ENCODE measurements at regions of chr13 and their contacts with region 1.

Region 1: GRCh38 chr13:24995226-24995804 is 100.6 kb upstream of the PABPC3 start:
- DNase-seq: peak; percentile 73
- H3K4me3 Mint-ChIP-seq: no peak overlapping the region
- H3K27ac Mint-ChIP-seq: no peak overlapping the region
- H3K4me1 Mint-ChIP-seq: peaks cover 3% of the 10 kb centered on the region
- H3K27me3 Mint-ChIP-seq: peaks cover 26% of the 10 kb centered on the region

Region 2: DNA sequence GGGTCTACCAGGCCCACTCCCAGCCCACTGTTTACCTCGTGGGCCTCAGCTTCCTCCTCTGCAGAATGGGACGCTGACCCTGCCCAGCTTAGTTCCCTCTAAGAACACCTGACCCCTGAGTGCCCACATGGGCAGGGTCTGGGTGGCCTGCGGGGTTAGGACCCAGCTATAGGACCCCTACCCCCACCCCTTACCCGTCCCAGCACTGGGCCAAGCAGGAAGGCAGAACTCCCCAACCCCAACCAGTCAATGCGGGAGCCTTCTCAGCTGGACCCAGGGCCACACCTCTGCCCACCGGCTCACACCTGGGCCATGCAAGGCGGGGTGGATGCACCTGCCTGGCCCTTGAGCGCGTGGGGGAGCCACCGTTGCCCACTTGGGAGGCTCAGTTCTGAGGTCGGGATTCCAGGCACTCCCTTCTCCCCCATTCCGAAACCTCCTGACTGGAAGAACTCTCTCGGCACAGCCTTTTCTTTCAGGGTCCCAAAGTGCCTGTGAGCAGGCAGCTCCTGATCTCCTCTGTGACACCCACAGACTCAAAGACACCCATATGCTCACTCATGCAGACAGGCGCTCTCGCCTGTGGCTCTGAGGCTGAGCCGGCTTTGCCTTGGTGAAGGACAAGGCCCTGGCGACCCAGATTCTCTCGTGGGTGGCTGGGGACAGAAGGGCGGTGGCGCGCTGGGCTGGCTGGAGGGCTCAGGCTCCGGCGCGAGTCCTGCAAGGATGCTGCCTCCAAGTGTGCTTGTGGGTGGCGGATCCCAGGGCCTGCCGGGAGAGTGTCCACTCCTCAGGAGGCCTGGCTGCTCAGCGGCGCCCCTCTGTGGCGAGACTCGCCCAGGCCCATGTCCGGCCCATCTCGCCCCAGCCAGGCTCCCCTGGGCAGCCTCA is 454.8 kb before region 1 on chr13:
- CTCF ChIA-PET with region 1: no interaction called
- DNase-seq: no peak
- H3K4me3 Mint-ChIP-seq: no peak overlapping the region
- H3K27ac Mint-ChIP-seq: no peak overlapping the region
- H3K4me1 Mint-ChIP-seq: peaks cover 9% of the 10 kb centered on the region
- H3K27me3 Mint-ChIP-seq: peaks cover 66% of the 10 kb centered on the region

Region 3: GRCh38 chr13:25114220-25114619 is 118.9 kb after region 1 on chr13:
- CTCF ChIA-PET with region 1: interaction called, 14 read pairs
- DNase-seq: peak; percentile 77
- H3K4me3 Mint-ChIP-seq: no peak overlapping the region
- H3K27ac Mint-ChIP-seq: no peak overlapping the region
- H3K4me1 Mint-ChIP-seq: no peaks in the 10 kb centered on the region
- H3K27me3 Mint-ChIP-seq: peaks cover 31% of the 10 kb centered on the region

Region 4: DNA sequence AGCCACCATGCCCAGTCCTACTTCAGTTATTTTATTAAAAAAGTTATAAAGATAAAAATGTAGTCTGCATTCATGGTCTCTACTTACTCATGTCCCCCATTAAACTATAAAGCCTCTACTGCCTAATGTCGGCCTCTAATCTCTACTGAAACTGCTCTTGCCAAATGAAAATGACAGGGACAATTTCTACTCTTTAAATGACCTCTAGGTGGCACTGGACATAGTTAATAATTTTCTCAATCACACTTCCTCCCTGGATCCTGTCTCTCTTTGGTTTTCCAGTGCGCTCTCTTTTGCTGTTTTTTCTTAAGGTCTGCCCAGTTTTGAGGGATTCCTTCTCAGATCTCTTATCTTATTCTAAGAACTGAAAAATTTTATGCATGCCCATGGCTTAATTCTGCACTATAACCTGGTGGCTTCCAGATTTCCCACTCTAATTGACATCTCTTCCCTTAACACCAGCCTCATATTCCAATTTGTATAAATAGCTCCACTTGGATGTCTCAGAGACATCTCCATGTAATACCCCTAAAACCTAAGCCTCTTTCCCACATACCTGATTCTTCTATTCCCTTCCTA is 237.7 kb after region 1 on chr13:
- CTCF ChIA-PET with region 1: no interaction called
- DNase-seq: no peak
- H3K4me3 Mint-ChIP-seq: no peak overlapping the region
- H3K27ac Mint-ChIP-seq: no peak overlapping the region
- H3K4me1 Mint-ChIP-seq: no peaks in the 10 kb centered on the region
- H3K27me3 Mint-ChIP-seq: peaks cover 6% of the 10 kb centered on the region

Measured in activated naive CD4-positive, alpha-beta T cell treated with anti-CD3 and anti-CD28 coated beads, Interleukin-2, amount 10 ng/mL, durations not matched to agents 7 days and 5 days (primary cell).